Pancreas (tissue), 10 donors: ENCODE measurements at regions of chr9 and their contacts with region 1.

Region 1: DNA sequence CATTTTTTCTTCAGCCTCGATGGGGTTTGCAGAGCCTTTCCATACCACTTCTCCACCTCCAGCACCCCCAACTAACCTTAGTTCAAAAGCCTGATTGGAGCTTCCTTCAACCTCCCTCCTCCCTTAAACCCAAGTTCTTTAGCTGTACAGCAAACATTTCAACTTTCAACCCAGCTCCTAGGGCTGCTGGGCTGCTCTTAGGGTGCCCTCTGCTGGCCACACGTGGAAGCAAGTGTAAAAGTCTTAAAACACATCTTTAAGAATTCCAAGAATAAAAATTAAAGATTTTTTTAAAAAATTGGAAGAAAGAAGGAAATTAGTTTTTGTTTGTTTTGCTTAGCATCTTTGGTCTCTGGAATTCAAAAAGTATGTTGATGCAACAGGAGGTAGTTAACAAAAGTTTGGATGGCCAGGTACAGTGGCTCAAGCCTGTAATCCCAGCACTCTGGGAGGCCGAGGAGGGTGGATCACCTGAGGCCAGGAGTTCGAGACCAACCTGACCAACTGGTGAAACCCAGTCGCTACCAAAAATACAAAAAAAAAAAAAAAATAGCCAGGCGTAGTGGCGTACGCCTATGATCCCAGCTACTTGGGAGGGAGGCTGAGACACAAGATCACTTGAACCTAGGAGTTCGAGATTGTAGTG is 15.5 kb upstream of the HSD17B3 start:
- DNase-seq: peak in 2 of 6 donors; percentile 17 to 49
- ATAC-seq: peak; percentile 61 to 87 (median 86)
- H3K4me3 ChIP-seq: no peak overlapping the region
- H3K27ac ChIP-seq: no peak overlapping the region
- H3K4me1 ChIP-seq: no peaks in the 10 kb centered on the region
- H3K27me3 ChIP-seq: no peaks in the 10 kb centered on the region
- CTCF ChIP-seq: peak; percentile 38 to 77 (median 64)

Region 2: GRCh38 chr9:96232539-96233241 is 84.8 kb before region 1 on chr9:
- intact Hi-C with region 1: loop called in 2 of 3 experiments (anchors 10 kb)
- DNase-seq: peak in 1 of 6 donors; percentile 38
- ATAC-seq: peak; percentile 66 to 88 (median 87)
- H3K4me3 ChIP-seq: no peak overlapping the region
- H3K27ac ChIP-seq: no peak overlapping the region
- H3K4me1 ChIP-seq: no peaks in the 10 kb centered on the region
- H3K27me3 ChIP-seq: no peaks in the 10 kb centered on the region
- CTCF ChIP-seq: peak; percentile 73 to 89 (median 80)

Region 3: DNA sequence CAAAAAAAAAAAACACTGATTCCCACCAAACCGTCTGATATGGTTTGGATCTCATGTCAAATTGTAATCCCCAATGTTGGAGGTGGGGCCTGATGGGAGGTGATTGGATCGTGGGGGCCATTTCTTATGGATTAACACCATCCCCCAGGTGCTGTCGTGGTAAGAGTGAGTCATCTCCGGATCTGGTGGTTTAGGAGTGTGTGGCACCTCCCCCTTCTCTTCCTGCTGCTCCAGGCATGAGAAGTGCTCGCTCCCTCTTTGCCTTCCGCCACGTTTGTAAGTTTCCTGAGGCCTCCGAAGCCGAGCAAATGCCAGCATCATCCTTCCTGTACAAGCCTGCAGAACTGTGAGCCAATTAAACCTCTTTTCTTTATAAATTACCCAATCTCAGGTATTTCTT is 60.7 kb before region 1 on chr9:
- intact Hi-C with region 1: loop called in 1 of 3 experiments (anchors 10 kb)
- DNase-seq: no peak
- ATAC-seq: no peak
- H3K4me3 ChIP-seq: no peak overlapping the region
- H3K27ac ChIP-seq: no peak overlapping the region
- H3K4me1 ChIP-seq: no peaks in the 10 kb centered on the region
- H3K27me3 ChIP-seq: no peaks in the 10 kb centered on the region
- CTCF ChIP-seq: no peak